ENCODE measurements at regions of chr7 and their contacts with region 1.

Region 1: DNA sequence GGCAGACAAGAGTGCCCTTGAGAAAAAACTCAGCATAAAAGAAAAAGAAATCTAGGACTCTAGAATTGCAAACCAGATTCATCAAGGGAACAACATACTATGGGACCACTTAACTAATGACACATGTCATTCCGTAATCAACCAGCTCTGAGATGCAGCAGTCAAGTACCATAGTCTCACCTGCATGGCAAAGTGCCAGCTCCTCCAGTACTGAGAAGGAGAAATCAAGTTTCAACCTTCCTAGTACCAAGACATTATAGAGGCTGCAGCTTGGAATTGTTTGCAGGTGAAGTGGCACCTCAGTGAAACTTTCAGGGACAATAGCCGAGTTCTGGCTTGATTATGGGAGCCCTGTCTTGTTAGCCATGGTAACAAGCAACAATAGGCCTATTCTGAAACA is 11.5 kb downstream of the STEAP1 start:
- DNase-seq: no peak
- ATAC-seq: no peak
- H3K4me3 ChIP-seq: no peak overlapping the region
- H3K27ac ChIP-seq: no peak overlapping the region
- H3K4me1 ChIP-seq: no peaks in the 10 kb centered on the region
- H3K27me3 ChIP-seq: no peaks in the 10 kb centered on the region
- CTCF ChIP-seq: no peak
- EP300 ChIP-seq: no peak
- POLR2A ChIP-seq: no peak
- RAD21 ChIP-seq: no peak

Region 2: DNA sequence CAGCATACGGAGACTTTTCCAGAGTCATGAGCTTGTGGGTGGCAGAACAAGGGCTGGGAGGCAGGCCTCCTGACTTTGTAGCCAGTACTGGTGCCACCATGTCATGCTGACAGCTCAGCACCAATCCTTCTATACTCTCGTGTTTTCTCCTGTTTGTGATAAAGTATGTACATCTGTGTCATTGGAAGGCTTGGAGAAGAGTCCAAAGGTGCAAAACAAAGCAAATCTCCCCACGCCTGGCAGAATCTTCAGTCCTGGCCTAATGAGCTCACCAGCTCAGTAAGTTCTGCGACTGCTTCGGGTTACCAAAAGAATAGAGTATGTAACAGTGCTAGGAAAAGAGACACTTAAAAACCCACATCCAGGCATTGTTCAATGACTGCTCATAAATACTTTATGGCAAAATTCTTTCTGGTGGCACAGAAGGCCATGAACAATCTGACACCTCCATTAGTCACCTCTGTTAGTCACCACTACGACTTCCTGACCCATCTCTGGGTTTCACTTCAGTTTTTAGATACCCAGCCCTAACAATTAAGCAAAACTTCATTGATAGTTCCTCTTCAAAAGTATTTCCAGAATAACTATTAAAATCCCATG is 13.1 kb after region 1 on chr7:
- CTCF ChIA-PET with region 1: no interaction called
- POLR2A ChIA-PET with region 1: interaction called, 3 read pairs
- in situ Hi-C with region 1: no loop called
- intact Hi-C with region 1: loop called (anchors 1 kb)
- DNase-seq: no peak
- ATAC-seq: no peak
- H3K4me3 ChIP-seq: no peak overlapping the region
- H3K27ac ChIP-seq: no peak overlapping the region
- H3K4me1 ChIP-seq: no peaks in the 10 kb centered on the region
- H3K27me3 ChIP-seq: no peaks in the 10 kb centered on the region
- CTCF ChIP-seq: no peak
- EP300 ChIP-seq: no peak
- POLR2A ChIP-seq: no peak
- RAD21 ChIP-seq: no peak

Region 3: DNA sequence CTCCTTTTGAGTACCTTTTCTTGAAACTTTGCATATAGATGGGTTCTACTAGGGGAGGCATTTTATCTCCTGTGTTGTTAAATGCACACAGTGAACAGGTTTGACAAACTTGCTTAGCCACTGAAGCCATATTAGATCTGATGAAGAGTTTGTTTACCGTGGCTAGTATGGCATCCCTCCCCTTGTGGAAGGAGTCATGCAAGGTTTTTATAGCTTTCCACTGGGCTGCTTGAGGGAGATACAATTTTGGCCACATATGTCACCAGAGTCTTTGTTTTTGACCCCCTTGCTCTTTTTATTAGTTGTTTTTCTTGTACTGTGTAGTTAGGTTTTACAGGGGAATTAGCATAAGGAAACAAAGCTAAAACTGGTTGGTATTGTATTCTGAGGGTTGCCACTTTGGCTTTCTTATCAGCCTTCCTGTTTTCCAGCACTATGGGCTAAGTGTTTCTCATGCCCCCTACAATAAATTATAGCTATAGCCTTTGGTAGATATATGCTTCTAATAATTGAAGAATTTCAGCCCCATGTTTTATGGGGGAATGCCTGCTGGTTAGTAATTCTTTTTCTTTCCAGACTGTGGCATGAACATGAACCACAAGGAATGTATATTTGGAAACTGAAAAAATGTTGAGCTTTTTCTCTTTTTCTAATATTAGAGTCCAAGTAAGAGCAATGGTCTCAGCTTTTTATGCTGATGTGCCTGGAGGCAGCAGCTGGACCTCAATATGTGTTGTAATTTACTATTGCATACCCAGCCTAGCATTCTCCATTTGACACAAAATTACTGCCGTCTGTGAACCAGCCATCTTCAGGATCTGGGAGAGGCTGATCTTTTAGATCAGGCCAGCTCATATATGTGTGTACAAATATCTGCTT is 27.4 kb after region 1 on chr7:
- CTCF ChIA-PET with region 1: no interaction called
- POLR2A ChIA-PET with region 1: no interaction called
- in situ Hi-C with region 1: no loop called
- intact Hi-C with region 1: no loop called
- DNase-seq: no peak
- ATAC-seq: no peak
- H3K4me3 ChIP-seq: no peak overlapping the region
- H3K27ac ChIP-seq: no peak overlapping the region
- H3K4me1 ChIP-seq: no peaks in the 10 kb centered on the region
- H3K27me3 ChIP-seq: no peaks in the 10 kb centered on the region
- CTCF ChIP-seq: no peak
- EP300 ChIP-seq: no peak
- POLR2A ChIP-seq: no peak
- RAD21 ChIP-seq: no peak

Region 4: GRCh38 chr7:90312745-90313144 is 147.0 kb after region 1 on chr7:
- CTCF ChIA-PET with region 1: no interaction called
- POLR2A ChIA-PET with region 1: no interaction called
- in situ Hi-C with region 1: no loop called
- intact Hi-C with region 1: no loop called
- DNase-seq: peak in 1 of 4 experiments; percentile 11
- ATAC-seq: peak; percentile 67; the same call in 2 of the 3 replicates
- H3K4me3 ChIP-seq: no peak overlapping the region
- H3K27ac ChIP-seq: no peak overlapping the region
- H3K4me1 ChIP-seq: no peaks in the 10 kb centered on the region
- H3K27me3 ChIP-seq: no peaks in the 10 kb centered on the region; a peak in 1 of 5 replicates
- CTCF ChIP-seq: peak in 1 of 3 experiments; percentile 47; a peak in 3 of 6 replicates
- EP300 ChIP-seq: no peak
- POLR2A ChIP-seq: no peak
- RAD21 ChIP-seq: peak in 1 of 2 experiments; percentile 49; a peak in 1 of 4 replicates

Region 5: DNA sequence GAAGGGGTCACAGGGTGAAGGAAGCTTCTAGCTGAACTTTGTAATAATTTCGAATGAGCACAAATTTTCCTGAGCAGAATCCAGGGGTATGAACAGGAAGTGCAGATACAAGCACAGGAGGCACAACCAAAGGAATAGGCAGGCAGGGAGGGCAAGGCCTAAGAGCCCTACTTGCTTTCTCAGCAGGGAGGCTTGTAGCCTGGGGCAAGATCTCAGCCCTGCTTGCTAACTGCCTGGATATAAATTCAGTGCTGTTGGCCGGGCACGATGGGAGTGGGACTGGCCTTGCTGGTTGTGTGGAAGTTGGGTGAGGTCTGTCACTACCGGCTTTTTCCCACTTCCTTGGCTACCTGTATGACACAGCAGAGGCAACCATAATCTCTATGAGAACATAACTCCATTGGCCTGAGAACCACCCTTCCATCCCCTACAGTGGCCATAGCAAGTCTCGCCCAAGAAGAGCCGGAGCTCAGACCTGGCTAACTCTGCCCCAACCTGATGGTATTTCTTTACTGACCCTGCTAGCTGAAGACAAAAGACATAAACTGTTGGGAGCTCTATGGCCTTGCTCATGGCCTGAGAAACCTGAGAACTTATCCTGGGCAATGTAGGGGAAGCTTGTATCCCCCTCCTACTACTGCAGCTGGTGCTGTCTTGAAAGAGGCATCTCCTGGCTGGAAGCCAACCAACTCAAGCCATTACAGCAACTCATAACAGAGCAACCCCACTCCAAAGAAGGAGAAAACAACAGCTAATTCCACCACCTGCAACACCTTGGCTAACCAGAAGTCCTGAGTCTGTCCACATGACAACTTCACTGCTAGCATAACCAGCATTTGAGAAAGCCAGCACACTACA is 265.1 kb after region 1 on chr7:
- CTCF ChIA-PET with region 1: no interaction called
- POLR2A ChIA-PET with region 1: no interaction called
- in situ Hi-C with region 1: loop called (anchors 5 kb)
- intact Hi-C with region 1: no loop called
- DNase-seq: no peak
- ATAC-seq: no peak
- H3K4me3 ChIP-seq: no peak overlapping the region
- H3K27ac ChIP-seq: no peak overlapping the region
- H3K4me1 ChIP-seq: no peaks in the 10 kb centered on the region
- H3K27me3 ChIP-seq: no peaks in the 10 kb centered on the region; a peak in 1 of 5 replicates
- CTCF ChIP-seq: no peak
- EP300 ChIP-seq: no peak
- POLR2A ChIP-seq: no peak
- RAD21 ChIP-seq: no peak